ENCODE measurements at regions of chr7 and their contacts with region 1.

Region 1: DNA sequence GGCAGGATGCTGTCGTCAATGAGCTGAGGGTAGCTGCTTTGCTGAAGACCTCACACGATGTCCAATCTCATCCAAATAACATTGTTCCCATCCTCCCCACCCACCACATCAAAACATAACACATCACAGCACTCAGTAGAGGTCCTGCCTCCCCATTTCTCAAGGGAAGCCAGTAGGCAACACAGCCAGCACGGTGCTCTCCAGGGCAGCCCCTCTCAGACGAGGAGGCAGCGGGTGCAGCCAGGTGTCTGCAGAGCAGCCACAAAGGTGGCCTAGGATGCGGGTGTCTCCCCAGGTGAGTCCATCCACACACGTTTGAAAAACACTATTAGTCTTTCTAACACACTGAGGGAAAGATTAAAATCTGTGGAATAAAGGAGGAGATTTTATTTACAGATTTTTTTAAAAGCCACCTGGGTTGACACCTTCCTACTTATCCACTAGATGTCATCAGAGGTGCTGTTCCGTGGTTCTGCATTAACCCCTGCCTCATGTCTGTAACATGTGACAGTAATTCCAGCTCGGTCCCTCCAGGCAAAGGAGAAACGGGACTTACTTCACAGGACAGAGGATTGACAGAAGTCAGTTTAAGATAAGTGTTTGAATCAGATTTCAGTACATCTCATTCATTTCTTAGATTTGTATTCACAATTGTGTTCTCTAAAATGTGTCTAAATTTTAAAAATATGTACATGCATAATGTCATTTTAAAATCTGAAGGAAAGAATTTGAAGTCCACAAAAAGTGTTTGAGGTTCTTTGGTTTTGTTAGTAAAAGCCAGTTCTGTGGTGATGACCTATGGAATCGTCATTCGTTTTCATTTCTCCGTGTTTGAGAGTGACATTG is 68.0 kb downstream of the LANCL2 start:
- DNase-seq: peak; percentile 54 to 61
- H3K4me3 ChIP-seq: no peak overlapping the region
- H3K4me3 Mint-ChIP-seq: no peak overlapping the region
- H3K27ac Mint-ChIP-seq: no peak overlapping the region
- H3K4me1 ChIP-seq: no peaks in the 10 kb centered on the region
- H3K4me1 Mint-ChIP-seq: no peaks in the 10 kb centered on the region
- H3K27me3 ChIP-seq: no peaks in the 10 kb centered on the region
- H3K27me3 Mint-ChIP-seq: no peaks in the 10 kb centered on the region
- CTCF ChIP-seq: peak; percentile 63 to 67

Region 2: DNA sequence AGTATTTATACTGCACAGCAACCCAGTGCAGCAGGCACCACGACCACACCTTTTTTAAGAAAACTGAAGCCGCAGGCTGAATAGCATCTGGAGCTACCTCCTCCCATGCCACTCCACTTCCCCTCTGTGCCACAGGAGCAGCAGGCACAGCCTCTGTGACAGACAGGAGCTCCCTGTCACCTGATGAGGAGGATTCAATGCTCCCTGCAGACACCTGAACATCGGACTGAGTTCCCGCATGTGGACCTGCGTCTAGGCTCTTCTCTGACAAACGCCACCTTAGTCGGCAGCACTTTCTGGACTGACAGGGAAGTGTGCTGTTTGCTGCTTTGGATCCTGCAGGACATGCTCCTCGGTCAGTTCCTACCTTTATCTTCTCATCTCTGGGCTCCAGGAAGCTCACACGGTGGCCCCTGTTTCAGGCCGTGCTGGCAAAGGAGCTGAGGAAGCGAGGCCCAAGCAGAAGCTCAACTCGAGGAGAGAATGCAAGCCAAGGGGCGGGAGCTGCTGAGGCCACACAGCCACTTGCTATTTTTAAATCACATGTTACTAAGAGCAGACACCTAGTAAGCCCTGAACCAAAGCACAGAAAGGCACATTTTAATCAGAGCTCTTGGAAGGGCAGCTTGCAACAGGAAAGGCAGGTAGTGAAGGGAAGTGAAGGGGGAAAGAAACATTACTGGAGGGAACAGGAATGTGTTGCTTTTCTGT is 82.6 kb after region 1 on chr7:
- CTCF ChIA-PET with region 1: no interaction called
- POLR2A ChIA-PET with region 1: no interaction called
- intact Hi-C with region 1: loop called (anchors 10 kb)
- DNase-seq: no peak
- H3K4me3 ChIP-seq: no peak overlapping the region
- H3K4me3 Mint-ChIP-seq: no peak overlapping the region
- H3K27ac Mint-ChIP-seq: no peak overlapping the region
- H3K4me1 ChIP-seq: no peaks in the 10 kb centered on the region
- H3K4me1 Mint-ChIP-seq: no peaks in the 10 kb centered on the region
- H3K27me3 ChIP-seq: no peaks in the 10 kb centered on the region
- H3K27me3 Mint-ChIP-seq: no peaks in the 10 kb centered on the region
- CTCF ChIP-seq: no peak

Region 3: GRCh38 chr7:55572378-55573233 is 139.4 kb after region 1 on chr7 and contains the start of gene VOPP1:
- CTCF ChIA-PET with region 1: interaction called, 3 read pairs
- POLR2A ChIA-PET with region 1: no interaction called
- intact Hi-C with region 1: loop called (anchors 5 kb)
- DNase-seq: peak; percentile 55 to 82
- H3K4me3 ChIP-seq: peak within 1 kb of the TSS; percentile 93
- H3K4me3 Mint-ChIP-seq: peak within 1 kb of the TSS; percentile 90
- H3K27ac Mint-ChIP-seq: peak within 1 kb of the TSS; percentile 26
- H3K4me1 ChIP-seq: no peaks in the 10 kb centered on the region
- H3K4me1 Mint-ChIP-seq: peaks cover 16% of the 10 kb centered on the region
- H3K27me3 ChIP-seq: no peaks in the 10 kb centered on the region; the same call in 1 of the 2 replicates
- H3K27me3 Mint-ChIP-seq: no peaks in the 10 kb centered on the region
- CTCF ChIP-seq: no peak
- total RNA-seq, gene VOPP1: 43.6 and 46.8 TPM in 2 replicates

Region 4: DNA sequence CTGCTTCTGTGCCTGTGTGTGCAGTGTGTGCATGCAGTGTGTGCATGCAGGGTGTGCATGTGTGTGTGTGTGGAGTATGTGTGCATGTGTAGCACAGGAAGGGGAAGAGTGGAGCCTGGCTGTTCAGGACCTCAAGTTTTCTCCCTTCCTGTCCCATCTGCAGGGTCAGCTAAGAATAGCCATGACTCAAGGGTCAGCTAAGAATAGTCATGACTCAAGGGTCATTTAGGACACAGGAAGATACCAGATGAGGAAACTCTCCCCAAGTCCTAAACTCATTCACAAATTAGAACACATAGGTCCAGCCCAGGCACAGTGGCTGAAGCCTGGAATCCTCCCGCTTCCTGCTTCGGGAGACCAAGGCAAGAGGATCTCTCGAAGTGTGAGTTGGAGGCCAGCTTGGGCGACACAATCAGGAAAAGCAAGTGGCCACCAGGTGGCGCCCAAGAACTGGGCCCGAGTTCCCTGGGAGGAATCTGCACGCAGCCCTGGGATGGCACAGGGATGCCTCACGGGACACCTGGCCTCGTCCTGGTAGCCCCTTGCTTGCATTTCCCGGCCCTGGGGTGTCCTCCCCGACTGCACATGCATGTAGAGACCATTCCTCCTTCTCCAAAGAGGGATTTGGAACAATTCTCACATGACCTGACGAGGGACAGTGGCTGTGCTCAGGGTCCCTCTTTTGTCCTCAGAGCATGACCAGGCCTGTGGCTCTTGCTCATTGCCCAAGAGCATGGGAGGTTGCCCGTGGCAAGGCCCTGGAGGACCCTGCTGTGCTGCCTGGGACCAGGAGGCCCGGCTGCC is 160.6 kb after region 1 on chr7:
- CTCF ChIA-PET with region 1: interaction called, 3 read pairs
- POLR2A ChIA-PET with region 1: no interaction called
- intact Hi-C with region 1: loop called (anchors 1 kb)
- DNase-seq: peak; percentile 69 to 80
- H3K4me3 ChIP-seq: no peak overlapping the region
- H3K4me3 Mint-ChIP-seq: no peak overlapping the region
- H3K27ac Mint-ChIP-seq: no peak overlapping the region
- H3K4me1 ChIP-seq: no peaks in the 10 kb centered on the region
- H3K4me1 Mint-ChIP-seq: no peaks in the 10 kb centered on the region
- H3K27me3 ChIP-seq: no peaks in the 10 kb centered on the region
- H3K27me3 Mint-ChIP-seq: peaks cover 10% of the 10 kb centered on the region
- CTCF ChIP-seq: peak; percentile 83 to 84

Measured in Caco-2 (cell line).